CD8-positive, alpha-beta T cell (primary cell): ENCODE measurements at regions of chr18 and their contacts with region 1.

Region 1: GRCh38 chr18:68660354-68661183 is 54.3 kb downstream of the TMX3 start:
- DNase-seq: peak in 2 of 9 experiments; percentile 39 to 52
- ATAC-seq: no peak
- H3K4me3 ChIP-seq: no peak overlapping the region
- H3K4me3 Mint-ChIP-seq: no peak overlapping the region
- H3K27ac ChIP-seq: no peak overlapping the region
- H3K27ac Mint-ChIP-seq: no peak overlapping the region
- H3K4me1 ChIP-seq: no peaks in the 10 kb centered on the region
- H3K4me1 Mint-ChIP-seq: no peaks in the 10 kb centered on the region
- H3K27me3 ChIP-seq: no peaks in the 10 kb centered on the region
- H3K27me3 Mint-ChIP-seq: peaks cover 2% of the 10 kb centered on the region
- CTCF ChIP-seq: peak; percentile 64

Region 2: GRCh38 chr18:68387246-68387645 is 273.3 kb before region 1 on chr18:
- CTCF ChIA-PET with region 1: no interaction called
- POLR2A ChIA-PET with region 1: no interaction called
- intact Hi-C with region 1: no loop called
- DNase-seq: no peak
- ATAC-seq: no peak
- H3K4me3 ChIP-seq: no peak overlapping the region
- H3K4me3 Mint-ChIP-seq: no peak overlapping the region
- H3K27ac ChIP-seq: no peak overlapping the region
- H3K27ac Mint-ChIP-seq: no peak overlapping the region
- H3K4me1 ChIP-seq: no peaks in the 10 kb centered on the region
- H3K4me1 Mint-ChIP-seq: no peaks in the 10 kb centered on the region
- H3K27me3 ChIP-seq: no peaks in the 10 kb centered on the region
- H3K27me3 Mint-ChIP-seq: no peaks in the 10 kb centered on the region
- CTCF ChIP-seq: no peak

Region 3: GRCh38 chr18:68735483-68736343 is 75.1 kb after region 1 on chr18:
- CTCF ChIA-PET with region 1: no interaction called
- POLR2A ChIA-PET with region 1: no interaction called
- intact Hi-C with region 1: loop called in 1 of 2 experiments (anchors 5 kb)
- DNase-seq: peak in 2 of 9 experiments; percentile 43 to 58
- ATAC-seq: peak; percentile 62
- H3K4me3 ChIP-seq: no peak overlapping the region
- H3K4me3 Mint-ChIP-seq: no peak overlapping the region
- H3K27ac ChIP-seq: no peak overlapping the region
- H3K27ac Mint-ChIP-seq: no peak overlapping the region
- H3K4me1 ChIP-seq: no peaks in the 10 kb centered on the region
- H3K4me1 Mint-ChIP-seq: peaks cover 2% of the 10 kb centered on the region
- H3K27me3 ChIP-seq: no peaks in the 10 kb centered on the region
- H3K27me3 Mint-ChIP-seq: no peaks in the 10 kb centered on the region
- CTCF ChIP-seq: peak; percentile 62

Region 4: GRCh38 chr18:68865021-68865420 is 204.5 kb after region 1 on chr18:
- CTCF ChIA-PET with region 1: no interaction called
- POLR2A ChIA-PET with region 1: no interaction called
- intact Hi-C with region 1: no loop called
- DNase-seq: no peak
- ATAC-seq: no peak
- H3K4me3 ChIP-seq: no peak overlapping the region
- H3K4me3 Mint-ChIP-seq: no peak overlapping the region
- H3K27ac ChIP-seq: no peak overlapping the region
- H3K27ac Mint-ChIP-seq: no peak overlapping the region
- H3K4me1 ChIP-seq: no peaks in the 10 kb centered on the region
- H3K4me1 Mint-ChIP-seq: no peaks in the 10 kb centered on the region
- H3K27me3 ChIP-seq: no peaks in the 10 kb centered on the region
- H3K27me3 Mint-ChIP-seq: no peaks in the 10 kb centered on the region
- CTCF ChIP-seq: no peak